Activated B cell treated with CpG ODN at 0.5 μM for 24 hours (primary cell): ENCODE measurements at regions of chrX and their contacts with region 1.

Region 1: DNA sequence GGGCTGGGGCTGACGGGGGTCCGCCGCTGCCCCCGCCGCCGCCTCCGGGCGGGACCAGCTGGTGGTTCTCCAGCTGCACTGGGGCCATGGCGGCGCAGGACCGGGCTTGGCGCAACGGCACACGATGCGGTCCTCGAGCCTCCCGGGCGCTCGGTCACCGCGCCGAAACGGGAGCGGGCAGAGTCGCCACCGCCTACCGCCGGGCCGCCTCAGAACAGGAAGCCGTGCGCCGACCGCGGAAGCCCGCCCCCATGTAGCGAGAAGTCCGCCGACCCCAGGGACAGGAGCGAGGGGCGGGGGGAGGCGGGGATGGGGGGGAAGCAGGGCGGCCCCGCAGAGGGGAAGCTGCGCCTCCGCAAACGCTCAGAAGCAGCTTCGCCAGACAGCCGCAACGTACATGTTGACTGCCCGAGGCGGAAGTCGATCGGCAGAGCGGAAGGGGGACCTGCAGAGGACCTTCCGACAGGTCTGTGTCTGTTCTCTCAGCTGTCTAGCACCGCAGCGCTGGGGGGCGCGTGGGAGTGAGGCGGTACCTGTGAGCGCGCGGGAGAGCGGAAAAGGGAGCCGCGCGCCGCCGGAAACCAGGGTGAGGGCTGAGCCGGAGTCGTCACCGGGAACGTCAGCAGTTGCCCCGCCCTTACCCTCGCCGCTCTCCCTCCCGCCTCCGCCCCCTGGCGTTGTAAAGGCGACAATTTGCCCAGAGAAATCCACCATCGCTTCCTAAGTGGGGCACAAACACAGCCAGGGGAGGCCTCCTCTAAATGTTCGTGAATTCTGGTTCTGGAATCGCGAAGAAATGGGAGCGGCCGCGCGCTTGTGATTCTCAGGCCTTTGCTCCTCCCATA is at the start of gene MED14:
- DNase-seq: peak; percentile 77
- ATAC-seq: peak; percentile 80
- H3K4me3 Mint-ChIP-seq: peak within 1 kb of the TSS; percentile 89
- H3K27ac Mint-ChIP-seq: peak within 1 kb of the TSS; percentile 95
- H3K4me1 Mint-ChIP-seq: peaks cover 49% of the 10 kb centered on the region
- H3K27me3 Mint-ChIP-seq: no peaks in the 10 kb centered on the region
- CTCF ChIP-seq: no peak
- total RNA-seq, gene MED14: 52.4 and 62.6 TPM in 2 replicates

Region 2: DNA sequence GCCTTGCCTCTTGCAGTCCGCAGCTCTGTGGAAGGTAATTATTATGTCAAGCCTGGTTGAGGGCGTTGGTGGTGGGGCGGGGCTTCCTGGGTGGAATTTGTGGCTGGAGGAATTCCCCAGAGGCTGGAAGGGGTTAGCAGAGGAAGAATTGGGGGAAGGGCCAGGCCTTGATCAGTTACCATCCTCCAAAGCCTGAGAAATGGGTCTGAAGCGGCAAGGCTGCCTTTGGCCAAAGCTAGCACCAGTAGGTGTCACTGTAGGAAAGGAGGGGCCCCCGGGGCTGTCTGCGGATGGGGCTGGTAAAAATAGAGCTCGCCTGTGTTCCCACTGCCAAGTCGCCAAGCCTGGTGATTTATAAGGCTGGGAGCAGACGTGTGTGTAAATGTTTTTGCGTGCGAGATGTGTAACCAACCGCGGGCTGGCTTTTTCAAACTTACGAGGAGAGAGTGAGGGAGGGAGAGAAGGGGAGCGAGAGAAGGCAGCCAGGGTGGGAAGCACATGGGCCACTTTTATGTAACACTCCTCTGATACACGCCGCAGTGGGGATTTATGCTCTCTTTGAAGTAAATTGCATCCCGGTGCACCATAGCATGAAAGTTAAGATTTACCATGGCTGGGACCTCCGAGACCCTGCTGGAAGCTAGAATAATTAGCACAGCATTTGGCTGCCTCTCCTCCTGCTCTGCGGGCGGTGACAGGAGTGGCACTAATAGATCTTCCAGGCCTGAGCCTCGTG is 1004.7 kb before region 1 on chrX:
- CTCF ChIA-PET with region 1: no interaction called
- POLR2A ChIA-PET with region 1: no interaction called
- intact Hi-C with region 1: no loop called
- DNase-seq: no peak
- ATAC-seq: peak; percentile 64
- H3K4me3 Mint-ChIP-seq: peak overlapping the region; percentile 53
- H3K27ac Mint-ChIP-seq: no peak overlapping the region
- H3K4me1 Mint-ChIP-seq: peaks cover 5% of the 10 kb centered on the region
- H3K27me3 Mint-ChIP-seq: peaks cover 8% of the 10 kb centered on the region
- CTCF ChIP-seq: no peak

Region 3: DNA sequence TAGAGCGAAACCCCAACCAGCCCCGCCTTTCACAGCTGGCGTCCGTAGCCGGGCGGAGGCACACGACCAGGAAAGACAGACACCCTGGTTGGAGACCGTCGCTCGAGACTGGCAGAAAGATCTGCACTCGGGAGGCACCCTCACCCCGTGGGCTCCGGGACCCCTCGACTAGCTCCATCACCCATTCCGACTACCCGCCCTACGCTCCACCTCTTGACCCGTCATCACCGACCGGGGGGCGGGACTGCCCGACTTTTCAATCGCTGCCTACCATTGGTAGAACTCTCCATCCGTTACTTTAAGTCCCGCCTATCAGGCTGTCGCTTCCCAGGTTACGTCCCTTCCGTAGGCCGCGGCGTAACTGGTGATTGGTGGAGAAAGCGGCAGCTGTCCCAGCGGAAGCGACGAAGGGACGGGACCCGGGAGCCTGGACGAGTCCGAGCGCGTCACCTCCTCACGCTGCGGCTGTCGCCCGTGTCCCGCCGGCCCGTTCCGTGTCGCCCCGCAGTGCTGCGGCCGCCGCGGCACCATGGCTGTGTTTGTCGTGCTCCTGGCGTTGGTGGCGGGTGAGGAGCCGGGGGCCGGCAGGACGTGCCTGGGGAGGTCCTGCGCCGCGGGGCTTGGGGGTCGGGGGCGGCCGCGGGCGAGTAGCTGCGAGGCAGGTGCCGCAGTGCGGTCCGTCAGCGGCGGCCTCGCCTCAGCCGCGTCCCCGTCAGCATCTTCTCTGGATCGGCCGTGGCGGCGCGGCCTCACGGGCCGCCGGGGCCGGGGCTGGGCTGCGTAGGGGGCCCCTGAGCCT is 154.8 kb before region 1 on chrX and contains the start of gene ATP6AP2:
- CTCF ChIA-PET with region 1: no interaction called
- POLR2A ChIA-PET with region 1: interaction called, 3 read pairs
- intact Hi-C with region 1: loop called (anchors 2 kb)
- DNase-seq: peak; percentile 71
- ATAC-seq: peak; percentile 95
- H3K4me3 Mint-ChIP-seq: peak within 1 kb of the TSS; percentile 92
- H3K27ac Mint-ChIP-seq: peak within 1 kb of the TSS; percentile 94
- H3K4me1 Mint-ChIP-seq: peaks cover 27% of the 10 kb centered on the region
- H3K27me3 Mint-ChIP-seq: no peaks in the 10 kb centered on the region
- CTCF ChIP-seq: no peak
- total RNA-seq, gene ATP6AP2: 48.6 and 53.8 TPM in 2 replicates

Region 4: DNA sequence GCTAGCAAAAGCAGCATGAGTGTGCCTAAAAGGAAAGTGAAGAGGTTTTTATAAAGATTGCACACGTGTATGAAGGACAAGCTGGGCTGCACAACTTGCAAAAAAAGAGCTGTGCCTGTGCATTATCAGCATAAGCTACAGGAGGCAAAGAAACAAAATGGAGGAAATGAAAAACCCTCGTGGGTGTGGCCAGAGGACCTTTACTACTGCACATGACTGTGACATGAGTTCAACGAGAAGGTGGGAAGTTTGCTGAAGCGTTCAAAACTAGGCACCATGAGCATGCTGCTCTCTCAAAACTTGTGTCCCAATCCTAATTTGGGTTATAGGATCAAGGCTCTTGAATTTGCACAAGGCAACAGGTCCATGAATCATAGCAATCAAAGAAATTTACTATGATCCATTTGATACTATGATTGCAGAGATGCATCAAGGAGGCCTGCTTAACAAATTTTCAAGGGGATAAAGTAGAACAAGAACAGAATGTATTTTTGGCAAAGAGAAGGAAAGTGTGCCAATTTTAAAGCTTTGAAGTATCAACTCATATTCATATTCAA is 50.1 kb before region 1 on chrX:
- CTCF ChIA-PET with region 1: no interaction called
- POLR2A ChIA-PET with region 1: interaction called, 3 read pairs
- intact Hi-C with region 1: loop called (anchors 1 kb)
- DNase-seq: no peak
- ATAC-seq: peak; percentile 87
- H3K4me3 Mint-ChIP-seq: peak overlapping the region; percentile 2
- H3K27ac Mint-ChIP-seq: peak overlapping the region; percentile 56
- H3K4me1 Mint-ChIP-seq: peaks cover 22% of the 10 kb centered on the region
- H3K27me3 Mint-ChIP-seq: no peaks in the 10 kb centered on the region
- CTCF ChIP-seq: no peak

Region 5: GRCh38 chrX:40749681-40750494 is 14.3 kb after region 1 on chrX:
- CTCF ChIA-PET with region 1: interaction called, 3 read pairs
- POLR2A ChIA-PET with region 1: interaction called, 18 read pairs
- intact Hi-C with region 1: loop called (anchors 1 kb)
- DNase-seq: no peak
- ATAC-seq: peak; percentile 91
- H3K4me3 Mint-ChIP-seq: peak overlapping the region; percentile 58
- H3K27ac Mint-ChIP-seq: peak overlapping the region; percentile 70
- H3K4me1 Mint-ChIP-seq: peaks cover 27% of the 10 kb centered on the region
- H3K27me3 Mint-ChIP-seq: no peaks in the 10 kb centered on the region
- CTCF ChIP-seq: no peak

Region 6: GRCh38 chrX:40945361-40945713 is 209.8 kb after region 1 on chrX:
- CTCF ChIA-PET with region 1: no interaction called
- POLR2A ChIA-PET with region 1: no interaction called
- intact Hi-C with region 1: no loop called
- DNase-seq: no peak
- ATAC-seq: peak; percentile 62
- H3K4me3 Mint-ChIP-seq: no peak overlapping the region
- H3K27ac Mint-ChIP-seq: no peak overlapping the region
- H3K4me1 Mint-ChIP-seq: peaks cover 3% of the 10 kb centered on the region
- H3K27me3 Mint-ChIP-seq: no peaks in the 10 kb centered on the region
- CTCF ChIP-seq: no peak

Region 7: GRCh38 chrX:41084044-41084892 is 348.7 kb after region 1 on chrX:
- CTCF ChIA-PET with region 1: no interaction called
- POLR2A ChIA-PET with region 1: interaction called, 20 read pairs
- intact Hi-C with region 1: loop called (anchors 1 kb)
- DNase-seq: peak; percentile 94
- ATAC-seq: peak; percentile 64
- H3K4me3 Mint-ChIP-seq: peak overlapping the region; percentile 90
- H3K27ac Mint-ChIP-seq: peak overlapping the region; percentile 99
- H3K4me1 Mint-ChIP-seq: peaks cover 36% of the 10 kb centered on the region
- H3K27me3 Mint-ChIP-seq: no peaks in the 10 kb centered on the region
- CTCF ChIP-seq: no peak

Region 8: GRCh38 chrX:41209853-41210252 is 474.3 kb after region 1 on chrX:
- CTCF ChIA-PET with region 1: no interaction called
- POLR2A ChIA-PET with region 1: no interaction called
- intact Hi-C with region 1: no loop called
- DNase-seq: no peak
- ATAC-seq: no peak
- H3K4me3 Mint-ChIP-seq: no peak overlapping the region
- H3K27ac Mint-ChIP-seq: no peak overlapping the region
- H3K4me1 Mint-ChIP-seq: no peaks in the 10 kb centered on the region
- H3K27me3 Mint-ChIP-seq: no peaks in the 10 kb centered on the region
- CTCF ChIP-seq: no peak

Region 9: DNA sequence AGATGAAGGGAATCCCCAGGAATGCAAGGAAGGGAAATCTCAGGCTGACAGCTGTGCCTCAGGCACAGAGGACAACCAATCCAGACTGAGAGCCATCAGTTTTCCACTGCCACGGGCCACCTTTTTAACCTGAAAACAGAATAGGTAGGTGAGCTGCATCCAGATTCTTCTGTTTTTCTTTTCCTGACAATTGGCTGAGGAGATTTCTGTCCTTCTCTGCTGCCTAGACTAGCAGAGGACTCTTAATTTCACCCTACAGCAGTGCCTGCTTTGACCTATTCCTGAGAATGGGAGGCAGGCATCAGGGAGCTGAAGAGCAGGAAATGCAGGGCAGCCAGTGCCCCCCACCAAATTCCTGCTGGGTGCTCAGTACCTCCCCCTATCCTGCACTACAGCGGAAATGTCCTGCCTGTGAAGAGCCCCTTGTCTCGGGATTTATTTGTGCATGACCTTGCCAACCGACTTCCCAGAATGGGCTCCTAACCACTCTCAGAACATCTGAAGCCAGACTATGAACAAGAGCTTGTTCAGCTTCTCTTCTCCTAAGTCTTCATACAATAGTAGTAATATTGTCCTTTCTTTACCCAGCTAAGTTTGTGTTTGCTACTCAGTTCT is 1122.7 kb after region 1 on chrX:
- CTCF ChIA-PET with region 1: no interaction called
- POLR2A ChIA-PET with region 1: no interaction called
- intact Hi-C with region 1: no loop called
- DNase-seq: no peak
- ATAC-seq: no peak
- H3K4me3 Mint-ChIP-seq: no peak overlapping the region
- H3K27ac Mint-ChIP-seq: no peak overlapping the region
- H3K4me1 Mint-ChIP-seq: peaks cover 16% of the 10 kb centered on the region
- H3K27me3 Mint-ChIP-seq: no peaks in the 10 kb centered on the region
- CTCF ChIP-seq: no peak